Endothelial cell of umbilical vein (primary cell): ENCODE measurements at regions of chr11 and their contacts with region 1.

Region 1: GRCh38 chr11:116217006-116217405 is 555.8 kb downstream of the BUD13 start:
- DNase-seq: peak; percentile 57
- H3K4me3 ChIP-seq: no peak overlapping the region
- H3K27ac ChIP-seq: no peak overlapping the region
- H3K4me1 ChIP-seq: no peaks in the 10 kb centered on the region
- H3K27me3 ChIP-seq: no peaks in the 10 kb centered on the region
- CTCF ChIP-seq: peak; percentile 86 to 89
- POLR2A ChIP-seq: no peak

Region 2: GRCh38 chr11:114738954-114739353 is 1478.1 kb before region 1 on chr11:
- CTCF ChIA-PET with region 1: interaction called, 10 read pairs
- POLR2A ChIA-PET with region 1: no interaction called
- dilution Hi-C with region 1: no loop called
- intact Hi-C with region 1: no loop called
- DNase-seq: peak; percentile 50
- H3K4me3 ChIP-seq: no peak overlapping the region
- H3K27ac ChIP-seq: no peak overlapping the region
- H3K4me1 ChIP-seq: no peaks in the 10 kb centered on the region
- H3K27me3 ChIP-seq: peaks cover 0 to 2% of the 10 kb centered on the region in 2 experiments
- CTCF ChIP-seq: peak; percentile 57 to 78
- POLR2A ChIP-seq: no peak

Region 3: GRCh38 chr11:116112087-116112935 is 104.7 kb before region 1 on chr11:
- CTCF ChIA-PET with region 1: no interaction called
- POLR2A ChIA-PET with region 1: no interaction called
- dilution Hi-C with region 1: no loop called
- intact Hi-C with region 1: no loop called
- DNase-seq: no peak
- H3K4me3 ChIP-seq: no peak overlapping the region
- H3K27ac ChIP-seq: no peak overlapping the region
- H3K4me1 ChIP-seq: no peaks in the 10 kb centered on the region
- H3K27me3 ChIP-seq: no peaks in the 10 kb centered on the region
- CTCF ChIP-seq: no peak
- POLR2A ChIP-seq: no peak

Region 4: DNA sequence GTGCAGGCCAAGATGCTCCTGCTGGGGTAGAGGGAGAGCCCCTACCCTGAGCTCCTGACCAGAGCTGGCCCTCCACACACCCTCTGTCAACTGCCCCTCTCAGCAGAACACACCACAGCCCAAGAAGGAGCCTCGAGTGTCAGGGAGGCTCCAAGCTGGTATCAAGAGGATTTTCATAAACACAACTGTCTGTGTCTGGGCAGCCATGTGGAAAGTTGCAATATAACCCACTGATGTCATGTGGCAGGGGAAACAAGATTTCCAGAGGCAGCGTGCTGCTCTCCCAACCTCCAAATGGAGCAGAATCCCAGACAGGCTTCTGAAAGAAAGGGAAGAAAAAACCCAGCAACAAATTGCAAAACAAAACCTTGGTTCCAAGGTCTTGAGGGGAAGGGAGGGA is 14.1 kb before region 1 on chr11:
- CTCF ChIA-PET with region 1: interaction called, 10 read pairs
- POLR2A ChIA-PET with region 1: no interaction called
- dilution Hi-C with region 1: no loop called
- intact Hi-C with region 1: no loop called
- DNase-seq: no peak
- H3K4me3 ChIP-seq: no peak overlapping the region
- H3K27ac ChIP-seq: no peak overlapping the region
- H3K4me1 ChIP-seq: no peaks in the 10 kb centered on the region
- H3K27me3 ChIP-seq: no peaks in the 10 kb centered on the region
- CTCF ChIP-seq: no peak
- POLR2A ChIP-seq: no peak

Region 5: GRCh38 chr11:116276051-116277044 is 59.3 kb after region 1 on chr11:
- CTCF ChIA-PET with region 1: no interaction called
- POLR2A ChIA-PET with region 1: no interaction called
- dilution Hi-C with region 1: no loop called
- intact Hi-C with region 1: loop called (anchors 1 kb)
- DNase-seq: peak; percentile 50
- H3K4me3 ChIP-seq: no peak overlapping the region
- H3K27ac ChIP-seq: no peak overlapping the region
- H3K4me1 ChIP-seq: no peaks in the 10 kb centered on the region
- H3K27me3 ChIP-seq: peaks cover 0 to 3% of the 10 kb centered on the region in 2 experiments
- CTCF ChIP-seq: peak; percentile 84 to 95
- POLR2A ChIP-seq: no peak

Region 6: GRCh38 chr11:116302756-116303155 is 85.8 kb after region 1 on chr11:
- CTCF ChIA-PET with region 1: no interaction called
- POLR2A ChIA-PET with region 1: no interaction called
- dilution Hi-C with region 1: no loop called
- intact Hi-C with region 1: no loop called
- DNase-seq: no peak
- H3K4me3 ChIP-seq: no peak overlapping the region
- H3K27ac ChIP-seq: no peak overlapping the region
- H3K4me1 ChIP-seq: no peaks in the 10 kb centered on the region
- H3K27me3 ChIP-seq: no peaks in the 10 kb centered on the region
- CTCF ChIP-seq: no peak
- POLR2A ChIP-seq: no peak

Region 7: DNA sequence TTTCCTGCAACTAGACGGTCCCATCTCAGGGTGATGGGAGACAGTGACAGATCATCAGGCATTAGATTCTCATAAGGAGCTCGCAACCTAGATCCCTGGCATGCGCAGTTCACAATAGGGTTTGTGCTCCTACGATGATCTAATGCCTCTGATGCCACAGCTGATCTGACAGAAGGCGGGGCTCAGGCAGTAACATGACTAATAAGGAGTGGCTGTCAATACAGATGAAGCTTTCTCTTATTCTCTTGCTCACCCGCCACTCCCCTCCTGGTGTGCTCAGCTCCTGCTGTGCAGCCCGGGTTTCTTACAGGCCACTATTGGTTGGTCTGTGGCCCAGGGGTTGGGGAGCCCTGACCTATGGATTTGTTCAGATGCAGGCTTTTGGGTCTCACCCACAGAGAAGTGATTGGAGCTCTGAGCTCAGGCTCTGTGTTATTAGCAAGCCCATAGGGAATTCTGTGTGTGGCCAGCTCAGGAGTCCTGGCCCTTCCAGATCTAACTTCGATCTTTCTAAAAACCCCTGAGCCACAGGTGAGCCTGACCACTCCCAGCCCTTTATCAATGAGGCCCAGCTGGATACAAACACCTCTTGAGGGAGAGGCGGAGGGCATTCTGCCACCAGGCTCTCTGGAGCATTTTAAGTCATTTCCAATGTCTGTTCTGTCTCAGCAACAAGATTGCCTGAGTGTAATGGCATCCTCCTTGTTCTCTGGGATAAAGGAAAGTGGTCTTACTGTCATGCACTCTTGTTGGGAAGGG is 203.9 kb after region 1 on chr11:
- CTCF ChIA-PET with region 1: interaction called, 34 read pairs
- POLR2A ChIA-PET with region 1: no interaction called
- dilution Hi-C with region 1: no loop called
- intact Hi-C with region 1: no loop called
- DNase-seq: no peak
- H3K4me3 ChIP-seq: no peak overlapping the region
- H3K27ac ChIP-seq: no peak overlapping the region
- H3K4me1 ChIP-seq: no peaks in the 10 kb centered on the region
- H3K27me3 ChIP-seq: no peaks in the 10 kb centered on the region
- CTCF ChIP-seq: no peak
- POLR2A ChIP-seq: no peak

Region 8: GRCh38 chr11:116641561-116642045 is 424.6 kb after region 1 on chr11:
- CTCF ChIA-PET with region 1: interaction called, 11 read pairs
- POLR2A ChIA-PET with region 1: no interaction called
- dilution Hi-C with region 1: no loop called
- intact Hi-C with region 1: loop called (anchors 5 kb)
- DNase-seq: peak; percentile 29
- H3K4me3 ChIP-seq: no peak overlapping the region
- H3K27ac ChIP-seq: no peak overlapping the region
- H3K4me1 ChIP-seq: no peaks in the 10 kb centered on the region
- H3K27me3 ChIP-seq: no peaks in the 10 kb centered on the region
- CTCF ChIP-seq: peak; percentile 73 to 86
- POLR2A ChIP-seq: no peak